Astrocyte of the cerebellum (primary cell): ENCODE measurements at regions of chr14 and their contacts with region 1.

Region 1: DNA sequence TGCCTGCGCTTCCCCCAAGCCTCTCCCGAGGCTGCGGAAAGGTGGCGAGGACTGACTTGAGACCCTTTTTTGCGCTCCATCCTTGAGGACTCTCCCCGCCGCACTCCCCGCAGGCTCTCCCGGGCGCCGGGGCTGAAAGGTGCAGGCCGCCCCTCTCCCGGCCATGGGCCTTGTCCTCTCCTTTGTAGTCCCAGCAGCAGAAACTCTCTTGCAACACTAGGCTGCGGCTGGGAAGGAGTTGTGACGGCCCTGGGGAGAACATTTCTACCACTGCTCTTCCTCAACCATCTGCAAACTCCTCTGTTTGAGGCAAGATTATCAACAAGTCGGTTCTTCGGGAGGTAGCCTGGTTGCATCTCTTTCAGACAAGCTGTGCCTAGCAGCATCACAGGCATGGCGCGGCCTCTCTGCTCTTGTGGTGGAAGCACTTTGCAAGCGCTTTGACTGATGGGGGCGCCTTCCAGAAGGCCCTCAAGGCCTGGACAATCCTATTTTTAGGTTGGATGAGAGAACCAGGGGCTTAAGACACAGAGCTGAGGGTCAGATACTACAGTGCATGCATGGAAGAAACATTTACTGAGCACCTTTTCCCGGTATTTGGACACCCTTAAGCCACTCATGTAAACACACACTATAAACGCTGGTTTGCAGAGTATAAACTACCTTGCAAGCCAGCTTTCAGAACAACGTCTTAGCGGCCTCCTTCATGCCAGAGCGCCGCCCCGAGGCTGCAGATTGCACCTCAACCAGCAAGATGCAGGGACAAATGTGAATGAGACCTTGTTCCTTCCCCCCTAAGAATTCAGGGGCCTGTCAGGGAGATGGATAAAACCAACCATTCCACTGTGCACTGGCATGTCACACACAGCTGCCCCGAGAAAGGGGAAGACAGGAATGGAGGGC is 1.2 kb upstream of the PRIMA1 start:
- DNase-seq: no peak
- H3K4me3 ChIP-seq: peak overlapping the region; percentile 14
- CTCF ChIP-seq: no peak

Region 2: GRCh38 chr14:93708311-93708734 is 81.2 kb before region 1 on chr14:
- in situ Hi-C with region 1: loop called (anchors 5 kb)
- DNase-seq: no peak
- H3K4me3 ChIP-seq: no peak overlapping the region
- CTCF ChIP-seq: no peak